Psoas muscle (tissue), 8 donors: ENCODE measurements at regions of chr3 and their contacts with region 1.

Region 1: GRCh38 chr3:108914774-108915641 is 38.7 kb downstream of the GUCA1C start:
- DNase-seq: no peak
- ATAC-seq: peak; percentile 57 to 84 (median 67)
- H3K4me3 ChIP-seq: no peak overlapping the region
- H3K27ac ChIP-seq: no peak overlapping the region
- H3K4me1 ChIP-seq: no peaks in the 10 kb centered on the region
- H3K27me3 ChIP-seq: no peaks in the 10 kb centered on the region
- CTCF ChIP-seq: peak; percentile 81

Region 2: DNA sequence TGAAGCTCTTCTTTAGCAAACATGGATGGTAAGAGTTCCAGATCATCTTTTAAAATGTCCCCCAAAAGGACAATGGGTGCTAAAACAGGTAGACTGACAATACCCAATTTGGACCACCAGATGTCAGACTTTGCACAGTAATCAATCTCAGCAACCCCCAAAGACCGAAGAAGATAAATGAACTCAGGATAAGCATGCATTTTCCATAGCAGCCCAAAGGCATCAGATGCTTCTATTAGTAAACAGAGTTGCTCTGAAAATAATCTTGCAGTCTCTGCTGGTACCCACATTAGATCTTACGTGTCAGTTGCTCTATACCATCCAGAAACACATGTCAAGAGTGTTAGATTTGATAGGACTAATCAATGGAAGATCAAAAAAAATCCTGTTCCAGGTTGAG is 425.2 kb before region 1 on chr3:
- intact Hi-C with region 1: loop called in 1 of 2 experiments (anchors 5 kb)
- DNase-seq: no peak
- ATAC-seq: peak in 3 of 4 donors; percentile 56 to 69 (median 59)
- H3K4me3 ChIP-seq: no peak overlapping the region
- H3K27ac ChIP-seq: no peak overlapping the region
- H3K4me1 ChIP-seq: peaks cover 7% of the 10 kb centered on the region
- H3K27me3 ChIP-seq: no peaks in the 10 kb centered on the region
- CTCF ChIP-seq: peak; percentile 78

Region 3: DNA sequence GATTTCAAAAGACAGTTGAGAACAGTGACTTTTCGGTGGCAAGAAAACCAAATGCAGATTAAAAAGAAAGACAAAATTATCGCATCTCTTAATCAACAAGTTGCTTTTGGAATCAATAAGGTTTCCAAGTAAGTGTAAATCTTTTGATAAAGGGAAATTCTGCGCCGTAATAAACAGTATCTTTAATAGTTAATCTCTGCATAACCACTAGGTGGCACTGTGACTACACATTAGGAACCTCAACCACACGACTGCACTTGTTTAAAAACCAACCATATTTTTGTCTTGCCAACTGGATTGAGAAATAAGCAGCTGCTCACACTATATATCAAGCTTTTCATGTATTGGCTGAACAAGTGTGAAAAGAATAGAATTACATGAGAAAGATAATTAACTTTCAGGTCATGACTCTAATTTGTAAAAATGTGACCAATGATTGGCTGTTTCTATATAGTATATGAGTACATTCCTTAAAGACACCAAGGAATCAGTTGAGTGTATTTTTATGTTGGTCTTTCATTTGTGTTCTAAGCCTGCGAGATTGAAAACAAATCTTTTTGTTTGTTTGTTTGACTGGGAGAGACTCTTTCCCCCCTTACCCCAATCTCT is 252.8 kb before region 1 on chr3:
- intact Hi-C with region 1: loop called (anchors 1 to 2 kb)
- DNase-seq: no peak
- ATAC-seq: peak; percentile 71 to 93 (median 88)
- H3K4me3 ChIP-seq: no peak overlapping the region
- H3K27ac ChIP-seq: no peak overlapping the region
- H3K4me1 ChIP-seq: peaks cover 14% of the 10 kb centered on the region
- H3K27me3 ChIP-seq: no peaks in the 10 kb centered on the region
- CTCF ChIP-seq: peak; percentile 85